Panc1 (cell line): ENCODE measurements at regions of chr14 and their contacts with region 1.

Region 1: DNA sequence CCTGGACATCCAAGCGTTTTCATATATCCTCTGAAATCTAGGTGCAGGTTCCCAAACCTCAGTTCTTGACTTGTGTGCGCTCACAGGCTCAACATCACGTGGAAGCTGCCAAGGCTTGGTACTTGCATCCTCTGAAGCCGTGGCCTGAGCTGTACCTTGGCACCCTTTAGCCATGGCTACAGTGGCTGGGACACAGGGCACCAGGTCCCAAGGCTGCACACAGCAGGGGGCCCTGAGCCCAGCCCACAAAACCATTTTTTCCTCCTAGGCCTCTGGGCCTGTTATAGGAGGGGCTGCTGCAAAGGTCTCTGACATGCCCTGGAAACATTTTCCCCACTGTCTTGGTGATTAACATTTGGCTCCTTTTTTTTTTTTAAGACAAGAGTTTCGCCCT is 11.6 kb upstream of the FAM177A1 start:
- DNase-seq: no peak
- ATAC-seq: no peak
- H3K4me3 ChIP-seq: no peak overlapping the region
- H3K27ac ChIP-seq: no peak overlapping the region
- H3K4me1 ChIP-seq: no peaks in the 10 kb centered on the region
- H3K27me3 ChIP-seq: no peaks in the 10 kb centered on the region
- CTCF ChIP-seq: no peak

Region 2: GRCh38 chr14:35016568-35016967 is 17.9 kb before region 1 on chr14:
- CTCF ChIA-PET with region 1: no interaction called
- POLR2A ChIA-PET with region 1: interaction called, 16 read pairs
- in situ Hi-C with region 1: no loop called
- intact Hi-C with region 1: no loop called
- DNase-seq: no peak
- ATAC-seq: no peak
- H3K4me3 ChIP-seq: no peak overlapping the region
- H3K27ac ChIP-seq: no peak overlapping the region
- H3K4me1 ChIP-seq: no peaks in the 10 kb centered on the region
- H3K27me3 ChIP-seq: no peaks in the 10 kb centered on the region
- CTCF ChIP-seq: no peak